WTC11 (cell line): ENCODE measurements at regions of chr1 and their contacts with region 1.

Region 1: DNA sequence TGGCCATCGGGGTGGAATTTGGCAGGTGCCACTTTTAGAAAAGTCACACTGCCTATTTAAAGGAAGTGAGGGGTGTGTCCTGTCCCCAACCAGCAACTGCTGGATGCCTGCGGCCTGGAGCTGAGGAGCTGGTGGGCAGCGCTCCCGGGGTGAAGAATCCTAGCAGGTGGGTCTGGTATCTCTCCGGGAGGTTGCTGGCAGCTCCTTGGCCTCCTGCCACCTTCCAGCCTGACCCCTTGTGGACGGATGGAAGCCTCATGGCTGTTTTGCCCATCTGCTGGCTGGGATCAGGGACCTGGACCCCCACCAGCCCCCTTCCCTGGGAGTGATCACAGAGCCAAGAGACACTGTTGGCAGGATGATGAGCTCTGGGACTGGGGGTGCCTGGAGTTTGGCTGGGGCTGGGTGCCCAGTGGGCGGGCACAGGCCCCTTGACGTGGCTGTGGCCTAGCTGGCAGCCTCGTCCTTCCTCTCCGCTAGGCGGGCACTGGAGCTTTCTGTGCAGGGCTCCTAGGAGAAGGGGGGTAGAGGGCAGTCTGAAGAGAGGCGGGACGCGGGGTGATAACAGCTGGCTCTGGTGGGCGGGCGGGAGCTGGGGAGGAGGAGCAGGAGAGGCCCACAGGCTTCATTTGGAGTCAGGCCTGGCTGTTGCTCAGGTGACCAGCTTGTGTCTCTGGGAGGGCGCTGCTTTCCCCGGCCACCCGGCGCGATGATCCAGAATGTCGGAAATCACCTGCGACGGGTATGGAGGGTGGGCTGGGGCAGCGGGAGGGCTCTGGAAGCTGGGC is at the start of gene ACOT11:
- DNase-seq: peak; percentile 45
- ATAC-seq: peak; percentile 85
- H3K4me3 Mint-ChIP-seq: no peak within 1 kb of the TSS
- H3K27ac Mint-ChIP-seq: no peak within 1 kb of the TSS
- H3K4me1 Mint-ChIP-seq: peaks cover 28% of the 10 kb centered on the region
- H3K27me3 Mint-ChIP-seq: no peaks in the 10 kb centered on the region
- CTCF ChIP-seq: no peak
- total RNA-seq, gene ACOT11: 3.8 to 4.4 TPM (median 4.2 TPM) in 3 replicates

Region 2: DNA sequence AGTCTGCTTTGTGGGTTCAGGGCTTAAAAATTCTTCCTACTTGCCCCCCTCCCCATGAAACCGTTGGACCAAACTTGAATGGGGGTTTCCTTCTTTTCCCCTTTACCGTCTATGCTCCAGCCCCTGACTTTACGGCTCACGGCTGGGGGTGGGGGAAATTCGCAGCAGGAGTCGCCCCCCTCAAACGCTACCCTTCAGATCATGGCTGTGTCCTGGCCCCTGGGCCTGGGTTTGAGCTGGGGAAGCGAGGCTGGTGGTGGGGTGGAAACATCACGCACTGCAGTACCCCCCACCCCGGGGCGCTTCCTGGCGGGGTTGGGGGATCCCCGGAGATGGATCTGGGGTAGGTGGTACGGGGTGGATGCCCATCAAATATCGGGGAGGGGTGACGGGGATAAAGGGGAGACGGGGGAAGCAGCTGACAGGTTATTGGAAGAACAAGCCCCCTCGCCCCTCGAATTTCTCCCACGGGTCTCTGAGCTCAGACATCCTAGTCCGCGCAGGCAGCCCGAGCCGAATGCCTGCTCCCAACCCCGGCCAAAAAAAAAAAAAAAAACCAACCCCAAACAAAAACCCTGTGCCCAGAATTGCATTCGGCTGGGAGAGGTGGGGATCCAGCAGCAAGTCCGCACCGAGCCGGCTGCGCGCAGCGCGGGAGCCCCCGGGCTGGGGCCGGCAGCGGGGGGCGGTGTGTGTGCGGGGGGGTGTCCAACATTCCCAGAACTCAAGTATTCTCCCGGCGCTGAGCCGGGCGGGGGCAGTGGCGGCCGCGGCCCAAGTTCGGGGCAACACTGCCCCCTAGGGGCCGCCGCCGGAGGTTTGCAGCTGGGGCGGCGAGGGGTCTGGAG is 58.8 kb before region 1 on chr1:
- CTCF ChIA-PET with region 1: interaction called, 13 read pairs
- POLR2A ChIA-PET with region 1: interaction called, 7 read pairs
- DNase-seq: peak; percentile 91
- ATAC-seq: peak; percentile 49
- H3K4me3 Mint-ChIP-seq: peak overlapping the region; percentile 81
- H3K27ac Mint-ChIP-seq: peak overlapping the region; percentile 86
- H3K4me1 Mint-ChIP-seq: peaks cover 32% of the 10 kb centered on the region
- H3K27me3 Mint-ChIP-seq: peaks cover 13% of the 10 kb centered on the region
- CTCF ChIP-seq: peak; percentile 95

Region 3: DNA sequence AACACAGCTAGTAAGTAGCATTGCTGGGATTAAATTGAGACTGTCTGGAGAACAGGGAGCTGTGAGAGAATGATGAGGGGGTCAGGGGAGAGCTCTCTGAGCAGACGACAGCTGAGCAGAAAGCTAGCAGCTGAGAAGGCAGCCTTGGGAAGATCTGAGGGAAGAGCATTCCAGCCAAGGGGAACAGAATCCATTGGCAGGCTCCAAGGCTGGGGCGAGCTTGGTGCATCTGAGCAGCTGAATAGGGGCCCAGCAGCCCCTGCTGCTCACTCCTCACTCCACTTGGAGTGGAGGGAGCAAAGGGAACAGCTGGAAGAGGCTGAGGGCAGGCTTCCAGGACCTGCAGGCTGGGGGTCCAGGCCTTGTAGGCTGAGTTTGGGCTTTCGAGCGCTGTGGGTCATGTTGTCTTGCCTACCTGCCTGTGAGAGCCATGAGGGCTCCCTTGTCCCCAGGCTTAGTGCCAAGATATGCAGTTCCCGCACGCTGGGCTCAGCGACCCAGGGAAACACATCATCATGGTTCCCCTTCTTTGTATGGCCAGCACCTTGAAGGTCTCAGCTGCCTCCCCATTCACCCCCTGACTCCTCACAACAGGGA is 10.7 kb after region 1 on chr1:
- CTCF ChIA-PET with region 1: interaction called, 16 read pairs
- POLR2A ChIA-PET with region 1: interaction called, 3 read pairs
- DNase-seq: no peak
- ATAC-seq: no peak
- H3K4me3 Mint-ChIP-seq: no peak overlapping the region
- H3K27ac Mint-ChIP-seq: no peak overlapping the region
- H3K4me1 Mint-ChIP-seq: no peaks in the 10 kb centered on the region
- H3K27me3 Mint-ChIP-seq: no peaks in the 10 kb centered on the region; the same call in 1 of the 2 replicates
- CTCF ChIP-seq: no peak

Region 4: DNA sequence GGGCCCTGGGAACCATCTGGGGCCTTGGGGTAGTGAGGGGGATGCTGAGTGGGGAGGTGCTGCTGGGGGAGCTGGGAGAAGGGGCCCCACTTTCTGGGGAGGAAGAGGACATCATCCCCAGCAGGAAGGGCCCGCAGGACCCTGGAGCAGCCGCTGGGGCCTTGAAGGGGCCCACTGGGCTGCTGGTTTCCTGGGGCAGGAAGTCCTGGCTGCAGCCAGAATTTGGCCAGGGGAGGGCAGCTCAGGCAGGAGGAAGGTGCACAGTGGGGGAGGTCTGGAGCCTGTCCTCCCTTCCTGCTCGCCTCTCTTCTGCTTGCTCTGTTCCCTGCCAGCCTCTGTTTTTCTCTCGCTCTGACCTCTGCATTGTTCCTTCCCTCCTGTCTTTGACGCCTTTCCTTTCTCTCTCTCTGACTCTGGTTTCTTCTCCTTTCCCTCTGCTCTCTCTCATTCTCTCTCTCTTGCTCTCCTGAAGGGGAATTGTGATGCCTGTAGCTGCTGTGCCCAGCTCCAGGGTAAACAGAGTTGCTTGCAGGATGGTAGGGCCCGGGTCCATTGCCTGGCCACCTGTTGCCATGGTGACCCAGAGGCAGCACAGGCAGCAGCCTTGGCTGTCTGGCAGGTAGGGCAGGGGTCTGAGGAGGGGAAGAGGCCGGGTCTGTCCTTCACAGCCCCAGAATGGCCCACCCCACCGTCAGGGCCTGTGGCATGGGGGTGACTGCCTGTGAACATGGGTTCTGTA is 24.2 kb after region 1 on chr1:
- CTCF ChIA-PET with region 1: interaction called, 12 read pairs
- POLR2A ChIA-PET with region 1: no interaction called
- DNase-seq: peak; percentile 50
- ATAC-seq: peak; percentile 73
- H3K4me3 Mint-ChIP-seq: no peak overlapping the region
- H3K27ac Mint-ChIP-seq: peak overlapping the region; percentile 92
- H3K4me1 Mint-ChIP-seq: peaks cover 66% of the 10 kb centered on the region
- H3K27me3 Mint-ChIP-seq: no peaks in the 10 kb centered on the region; the same call in 1 of the 2 replicates
- CTCF ChIP-seq: no peak

Region 5: DNA sequence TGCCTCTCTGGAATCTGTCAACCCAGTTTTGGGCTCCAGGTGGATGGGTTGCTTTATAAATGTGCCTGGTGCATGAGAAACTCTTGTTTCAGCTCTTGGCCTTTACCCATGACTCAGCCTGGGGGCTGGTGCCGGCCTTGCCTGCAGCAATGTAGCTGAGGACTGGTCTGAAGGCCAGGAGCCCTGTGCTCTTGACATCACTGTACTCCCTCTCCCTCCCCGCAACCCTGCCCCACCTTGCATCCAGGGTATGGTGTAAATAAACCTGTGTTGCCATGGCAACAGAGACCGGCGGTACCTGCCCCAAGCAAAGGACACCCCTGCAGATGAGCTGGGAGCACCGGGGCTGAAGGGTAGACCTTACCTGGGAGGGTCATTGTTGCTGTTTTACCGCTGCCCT is 62.3 kb after region 1 on chr1:
- CTCF ChIA-PET with region 1: interaction called, 12 read pairs
- POLR2A ChIA-PET with region 1: no interaction called
- DNase-seq: peak; percentile 58
- ATAC-seq: peak; percentile 36
- H3K4me3 Mint-ChIP-seq: no peak overlapping the region
- H3K27ac Mint-ChIP-seq: no peak overlapping the region
- H3K4me1 Mint-ChIP-seq: peaks cover 19% of the 10 kb centered on the region
- H3K27me3 Mint-ChIP-seq: no peaks in the 10 kb centered on the region
- CTCF ChIP-seq: no peak